CD8-positive, alpha-beta T cell (primary cell): ENCODE measurements at regions of chr21 and their contacts with region 1.

Region 1: GRCh38 chr21:29208682-29209059 is 78.2 kb downstream of the MAP3K7CL start:
- DNase-seq: peak in 1 of 9 experiments; percentile 5
- ATAC-seq: no peak
- H3K4me3 ChIP-seq: no peak overlapping the region
- H3K4me3 Mint-ChIP-seq: no peak overlapping the region
- H3K27ac ChIP-seq: no peak overlapping the region
- H3K27ac Mint-ChIP-seq: no peak overlapping the region
- H3K4me1 ChIP-seq: no peaks in the 10 kb centered on the region
- H3K4me1 Mint-ChIP-seq: no peaks in the 10 kb centered on the region
- H3K27me3 ChIP-seq: peaks cover 0 to 4% of the 10 kb centered on the region in 2 experiments
- H3K27me3 Mint-ChIP-seq: peaks cover 2% of the 10 kb centered on the region
- CTCF ChIP-seq: no peak

Region 2: DNA sequence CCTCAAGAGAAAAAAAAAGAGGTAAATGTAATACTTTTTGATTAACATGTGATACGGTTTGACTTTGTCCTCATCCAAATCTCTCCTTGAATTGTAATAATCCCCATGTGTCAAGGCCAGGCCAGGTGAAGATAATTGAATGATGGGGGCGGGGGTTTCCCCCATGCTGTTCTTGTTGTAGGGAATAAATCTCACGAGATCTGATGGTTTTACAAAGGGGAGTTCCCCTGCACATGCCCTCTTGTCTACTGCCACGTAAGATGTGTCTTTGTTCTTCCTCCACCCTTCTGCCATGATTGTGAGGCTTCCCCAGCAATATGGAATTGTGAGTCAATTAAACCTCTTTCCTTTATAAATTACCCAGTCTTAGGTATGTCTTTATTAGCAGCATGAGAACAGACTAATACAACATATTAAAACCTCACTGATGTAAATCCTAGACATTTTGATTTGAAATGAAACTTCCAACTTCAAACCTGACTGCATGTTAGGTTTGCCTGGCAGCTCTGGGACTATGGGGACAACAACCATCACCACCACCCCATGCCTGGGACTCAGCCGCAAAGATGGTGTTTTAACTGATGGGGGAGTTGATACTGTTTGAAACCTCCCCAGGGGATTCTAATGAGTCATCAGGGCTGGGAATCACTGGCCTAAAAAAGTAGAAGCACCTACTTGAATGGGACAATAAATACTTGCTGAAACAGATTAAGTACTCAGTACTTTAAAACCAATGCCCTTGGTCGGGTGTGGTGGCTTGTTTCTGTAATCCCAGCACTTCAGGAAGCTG is 57.2 kb after region 1 on chr21:
- CTCF ChIA-PET with region 1: no interaction called
- POLR2A ChIA-PET with region 1: no interaction called
- intact Hi-C with region 1: loop called in 1 of 2 experiments (anchors 10 kb)
- DNase-seq: peak in 2 of 9 experiments; percentile 3 to 16
- ATAC-seq: no peak
- H3K4me3 ChIP-seq: no peak overlapping the region
- H3K4me3 Mint-ChIP-seq: no peak overlapping the region
- H3K27ac ChIP-seq: no peak overlapping the region
- H3K27ac Mint-ChIP-seq: no peak overlapping the region
- H3K4me1 ChIP-seq: no peaks in the 10 kb centered on the region
- H3K4me1 Mint-ChIP-seq: no peaks in the 10 kb centered on the region
- H3K27me3 ChIP-seq: no peaks in the 10 kb centered on the region
- H3K27me3 Mint-ChIP-seq: no peaks in the 10 kb centered on the region
- CTCF ChIP-seq: no peak